HepG2 (cell line): ENCODE measurements at regions of chr9 and their contacts with region 1.

Region 1: GRCh38 chr9:105414947-105415661 is 32.7 kb upstream of the FSD1L start:
- DNase-seq: peak; percentile 62
- ATAC-seq: no peak
- H3K4me3 ChIP-seq: no peak overlapping the region
- H3K27ac ChIP-seq: no peak overlapping the region
- H3K4me1 ChIP-seq: peaks cover 75% of the 10 kb centered on the region
- H3K27me3 ChIP-seq: no peaks in the 10 kb centered on the region
- CTCF ChIP-seq: peak; percentile 93
- EP300 ChIP-seq: no peak
- POLR2A ChIP-seq: no peak
- RAD21 ChIP-seq: peak; percentile 90

Region 2: DNA sequence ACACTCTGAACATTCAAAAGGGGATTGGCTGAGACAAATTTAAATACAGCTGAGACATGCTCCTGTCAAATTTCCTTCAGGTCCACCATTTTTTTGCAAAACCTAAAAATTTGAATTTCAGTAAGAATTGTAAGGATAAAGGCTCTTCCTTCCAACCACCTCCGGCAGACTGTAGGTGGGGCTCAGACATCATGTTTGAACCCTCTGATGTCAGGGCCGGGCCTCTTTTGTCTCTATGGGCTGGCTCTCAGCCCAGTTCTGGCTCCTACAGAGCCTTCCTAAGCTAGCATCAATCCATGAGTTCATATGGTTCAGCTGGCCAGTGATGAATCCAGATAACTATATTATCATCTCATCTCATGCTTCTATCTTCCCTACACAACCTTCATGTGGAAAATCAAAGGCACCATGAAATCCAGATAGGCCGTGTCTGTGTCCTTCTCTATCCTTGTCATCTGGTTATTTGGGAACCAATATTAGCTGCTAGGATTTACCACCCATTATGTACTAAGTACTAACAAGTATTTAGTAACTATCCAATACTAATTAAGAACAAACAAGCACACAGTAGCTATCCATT is 607.0 kb before region 1 on chr9:
- CTCF ChIA-PET with region 1: no interaction called
- POLR2A ChIA-PET with region 1: no interaction called
- in situ Hi-C with region 1: no loop called
- intact Hi-C with region 1: no loop called
- DNase-seq: no peak
- ATAC-seq: peak; percentile 13; the same call in 2 of the 3 replicates
- H3K4me3 ChIP-seq: no peak overlapping the region
- H3K27ac ChIP-seq: no peak overlapping the region
- H3K4me1 ChIP-seq: no peaks in the 10 kb centered on the region
- H3K27me3 ChIP-seq: no peaks in the 10 kb centered on the region
- CTCF ChIP-seq: peak; percentile 23; the same call in 1 of the 2 replicates
- EP300 ChIP-seq: no peak
- POLR2A ChIP-seq: no peak
- RAD21 ChIP-seq: no peak

Region 3: GRCh38 chr9:104863180-104863883 is 551.8 kb before region 1 on chr9:
- CTCF ChIA-PET with region 1: interaction called, 3 read pairs
- POLR2A ChIA-PET with region 1: interaction called, 3 read pairs
- in situ Hi-C with region 1: loop called (anchors 10 kb)
- intact Hi-C with region 1: loop called (anchors 1 kb)
- DNase-seq: peak; percentile 59
- ATAC-seq: peak; percentile 66
- H3K4me3 ChIP-seq: no peak overlapping the region
- H3K27ac ChIP-seq: peak overlapping the region; percentile 8
- H3K4me1 ChIP-seq: peaks cover 59% of the 10 kb centered on the region
- H3K27me3 ChIP-seq: no peaks in the 10 kb centered on the region
- CTCF ChIP-seq: peak; percentile 70
- EP300 ChIP-seq: no peak
- POLR2A ChIP-seq: no peak
- RAD21 ChIP-seq: peak; percentile 56

Region 4: DNA sequence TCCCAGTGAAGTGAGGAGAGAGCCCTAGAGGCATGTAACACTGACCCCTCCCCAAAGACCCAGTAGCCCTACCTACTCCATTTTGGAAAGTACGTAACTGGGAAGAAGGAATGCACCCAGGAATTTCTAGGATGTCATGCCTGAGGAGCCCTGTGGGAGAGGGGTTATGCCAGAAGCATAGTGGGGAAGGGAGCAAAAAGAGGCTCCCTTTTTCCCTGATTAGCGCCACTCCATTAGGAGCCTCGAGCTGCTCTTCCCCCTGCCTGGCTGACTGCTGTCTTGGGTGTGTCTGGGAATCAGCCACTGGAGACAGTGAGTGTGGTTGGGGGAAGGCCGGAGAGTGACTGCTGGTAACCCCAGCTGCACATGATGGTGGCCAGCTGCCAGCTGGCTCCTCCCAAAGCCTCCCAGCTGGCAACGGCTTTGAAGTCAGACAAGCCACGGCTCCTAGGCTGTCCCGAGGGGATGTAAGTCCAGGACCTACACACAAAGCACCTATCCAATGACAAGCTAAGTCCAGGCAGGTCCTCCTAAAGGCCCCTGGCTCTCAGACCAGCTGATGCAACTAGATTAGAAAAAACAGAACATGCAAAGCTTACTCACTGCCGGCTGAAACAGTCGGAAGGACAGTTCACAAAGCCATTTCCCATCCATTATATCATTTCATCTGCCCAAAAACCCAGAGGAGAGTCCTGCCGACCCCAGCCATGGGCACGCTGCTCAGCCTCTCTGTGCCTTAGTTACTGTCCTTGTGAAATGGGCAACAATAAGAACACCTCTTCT is 350.6 kb before region 1 on chr9:
- CTCF ChIA-PET with region 1: no interaction called
- POLR2A ChIA-PET with region 1: interaction called, 4 read pairs
- in situ Hi-C with region 1: no loop called
- intact Hi-C with region 1: loop called (anchors 1 kb)
- DNase-seq: peak; percentile 96
- ATAC-seq: peak; percentile 89
- H3K4me3 ChIP-seq: peak overlapping the region; percentile 1 to 64 (median 46); a peak in 4 of 6 replicates
- H3K27ac ChIP-seq: peak overlapping the region; percentile 63
- H3K4me1 ChIP-seq: peaks cover 62% of the 10 kb centered on the region
- H3K27me3 ChIP-seq: no peaks in the 10 kb centered on the region
- CTCF ChIP-seq: no peak
- EP300 ChIP-seq: peak; percentile 60 to 67; a peak in 3 of 4 replicates
- POLR2A ChIP-seq: no peak; a peak in 1 of 4 replicates
- RAD21 ChIP-seq: no peak

Region 5: GRCh38 chr9:105191508-105192121 is 223.5 kb before region 1 on chr9:
- CTCF ChIA-PET with region 1: interaction called, 5 read pairs
- POLR2A ChIA-PET with region 1: no interaction called
- in situ Hi-C with region 1: no loop called
- intact Hi-C with region 1: loop called (anchors 1 kb)
- DNase-seq: peak; percentile 95
- ATAC-seq: peak; percentile 94
- H3K4me3 ChIP-seq: no peak overlapping the region; a peak in 1 of 6 replicates
- H3K27ac ChIP-seq: peak overlapping the region; percentile 67
- H3K4me1 ChIP-seq: peaks cover 57% of the 10 kb centered on the region
- H3K27me3 ChIP-seq: no peaks in the 10 kb centered on the region
- CTCF ChIP-seq: no peak
- EP300 ChIP-seq: peak; percentile 89 to 91
- POLR2A ChIP-seq: no peak
- RAD21 ChIP-seq: no peak

Region 6: GRCh38 chr9:105251733-105252404 is 163.2 kb before region 1 on chr9:
- CTCF ChIA-PET with region 1: no interaction called
- POLR2A ChIA-PET with region 1: interaction called, 4 read pairs
- in situ Hi-C with region 1: loop called (anchors 5 kb)
- intact Hi-C with region 1: loop called (anchors 1 kb)
- DNase-seq: peak; percentile 86
- ATAC-seq: peak; percentile 97
- H3K4me3 ChIP-seq: peak overlapping the region in 2 of 3 experiments; percentile 24 to 49; a peak in 2 of 6 replicates
- H3K27ac ChIP-seq: peak overlapping the region; percentile 80
- H3K4me1 ChIP-seq: peaks cover 81% of the 10 kb centered on the region
- H3K27me3 ChIP-seq: no peaks in the 10 kb centered on the region
- CTCF ChIP-seq: peak; percentile 48
- EP300 ChIP-seq: peak in 1 of 2 experiments; percentile 78; a peak in 2 of 4 replicates
- POLR2A ChIP-seq: no peak
- RAD21 ChIP-seq: no peak

Region 7: DNA sequence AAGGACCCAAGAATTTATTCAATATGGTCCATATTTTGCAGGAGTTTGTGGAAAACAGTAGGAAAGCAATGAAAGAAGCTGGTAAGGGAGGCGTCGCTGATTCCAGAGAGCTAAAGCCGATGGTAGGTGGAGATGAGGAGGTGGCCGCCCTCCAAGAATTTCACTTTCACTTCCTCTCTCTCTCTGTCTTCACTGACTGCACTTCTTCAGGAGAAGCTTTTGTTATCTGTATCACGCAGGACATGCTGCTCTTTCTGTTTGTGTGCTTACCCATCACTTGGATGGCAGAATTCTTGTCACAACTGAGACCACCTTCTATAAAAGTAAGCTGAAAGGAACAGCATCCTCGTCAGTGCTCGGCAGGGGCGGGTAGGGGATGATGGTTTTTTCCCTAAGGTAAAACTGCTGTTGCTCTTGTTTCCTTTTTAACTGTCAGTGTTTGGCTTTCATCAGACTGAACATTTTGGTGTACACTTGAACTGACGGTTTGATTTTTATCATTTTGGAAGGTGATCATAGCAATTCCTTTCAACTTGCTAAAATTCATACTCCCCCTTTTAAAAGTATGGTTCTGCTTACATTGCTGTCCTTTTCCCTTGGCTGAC is 29.6 kb before region 1 on chr9:
- CTCF ChIA-PET with region 1: no interaction called
- POLR2A ChIA-PET with region 1: no interaction called
- in situ Hi-C with region 1: no loop called
- intact Hi-C with region 1: no loop called
- DNase-seq: no peak
- ATAC-seq: no peak
- H3K4me3 ChIP-seq: no peak overlapping the region
- H3K27ac ChIP-seq: no peak overlapping the region
- H3K4me1 ChIP-seq: no peaks in the 10 kb centered on the region
- H3K27me3 ChIP-seq: no peaks in the 10 kb centered on the region
- CTCF ChIP-seq: no peak
- EP300 ChIP-seq: no peak
- POLR2A ChIP-seq: no peak
- RAD21 ChIP-seq: no peak

Region 8: DNA sequence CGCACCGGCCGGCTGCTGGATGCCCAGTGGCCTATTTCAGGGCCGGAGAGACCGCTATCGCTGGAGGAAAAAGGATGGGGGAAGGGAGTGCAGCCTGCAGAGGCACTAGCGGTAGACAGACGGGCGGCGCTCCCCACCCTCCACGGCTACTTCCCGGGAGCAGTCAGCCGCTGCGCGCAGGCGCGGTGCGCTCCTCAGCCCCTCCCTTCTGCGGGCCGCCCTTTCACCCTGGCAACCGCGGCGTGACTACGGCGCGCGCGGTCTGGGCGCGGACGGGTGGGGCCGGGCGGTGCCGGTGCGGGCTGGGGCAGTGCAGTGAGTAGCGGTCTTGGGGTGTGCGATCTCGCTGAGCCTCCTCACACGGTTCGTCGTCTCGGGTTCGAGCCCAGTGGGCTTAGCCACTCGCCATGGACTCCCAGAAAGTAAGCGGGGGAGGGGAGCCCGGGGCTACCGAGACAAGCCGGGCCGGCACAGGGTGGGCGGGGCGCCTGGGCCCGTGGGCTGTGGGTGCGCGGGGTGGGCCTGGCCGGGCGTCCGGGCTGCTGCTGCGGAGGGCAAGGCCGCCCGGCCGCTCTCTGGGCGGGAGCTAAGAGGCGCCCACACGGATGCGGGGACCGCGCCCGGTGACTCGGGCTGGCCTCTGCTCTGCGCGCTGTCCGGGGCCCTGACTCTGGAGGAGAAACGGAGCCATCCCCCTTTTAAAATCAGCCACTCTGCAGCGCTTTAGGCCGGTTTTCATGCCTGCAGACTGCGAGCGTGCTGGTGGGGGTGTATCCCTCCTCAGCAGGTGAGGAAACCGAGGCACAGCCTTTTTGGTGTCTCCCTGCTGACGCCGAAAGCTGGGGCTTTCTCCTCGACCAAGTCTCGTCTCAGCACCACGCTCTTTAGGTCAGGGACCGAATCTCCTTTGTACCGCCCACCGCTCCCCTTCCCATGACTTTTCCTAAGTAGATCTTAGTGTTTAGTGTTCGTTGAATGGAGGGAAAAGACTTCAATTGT is 33.0 kb after region 1 on chr9 and contains the start of gene FSD1L:
- CTCF ChIA-PET with region 1: no interaction called
- POLR2A ChIA-PET with region 1: interaction called, 19 read pairs
- in situ Hi-C with region 1: no loop called
- intact Hi-C with region 1: loop called (anchors 1 kb)
- DNase-seq: peak; percentile 84
- ATAC-seq: peak; percentile 95
- H3K4me3 ChIP-seq: peak within 1 kb of the TSS; percentile 83 to 90 (median 89)
- H3K27ac ChIP-seq: peak within 1 kb of the TSS; percentile 74
- H3K4me1 ChIP-seq: peaks cover 75% of the 10 kb centered on the region
- H3K27me3 ChIP-seq: no peaks in the 10 kb centered on the region; a peak in 1 of 5 replicates
- CTCF ChIP-seq: peak; percentile 80
- EP300 ChIP-seq: no peak
- POLR2A ChIP-seq: peak in 1 of 2 experiments; percentile 79; a peak in 3 of 4 replicates
- RAD21 ChIP-seq: peak; percentile 74
- total RNA-seq, gene FSD1L: 2.8 and 5.1 TPM in 2 replicates

Region 9: GRCh38 chr9:105557771-105558610 is 142.9 kb after region 1 on chr9 and contains the start of gene FKTN:
- CTCF ChIA-PET with region 1: no interaction called
- POLR2A ChIA-PET with region 1: no interaction called
- in situ Hi-C with region 1: no loop called
- intact Hi-C with region 1: no loop called
- DNase-seq: peak; percentile 73
- ATAC-seq: peak; percentile 95
- H3K4me3 ChIP-seq: peak within 1 kb of the TSS; percentile 76 to 93 (median 90)
- H3K27ac ChIP-seq: peak within 1 kb of the TSS; percentile 35
- H3K4me1 ChIP-seq: peaks cover 12% of the 10 kb centered on the region
- H3K27me3 ChIP-seq: no peaks in the 10 kb centered on the region; a peak in 1 of 5 replicates
- CTCF ChIP-seq: no peak
- EP300 ChIP-seq: no peak
- POLR2A ChIP-seq: peak in 1 of 2 experiments; percentile 84; a peak in 2 of 4 replicates
- RAD21 ChIP-seq: peak; percentile 9; the same call in 1 of the 2 replicates
- total RNA-seq, gene FKTN: 13.5 and 15.2 TPM in 2 replicates